ENCODE measurements at regions of chr6 and their contacts with region 1.

Region 1: DNA sequence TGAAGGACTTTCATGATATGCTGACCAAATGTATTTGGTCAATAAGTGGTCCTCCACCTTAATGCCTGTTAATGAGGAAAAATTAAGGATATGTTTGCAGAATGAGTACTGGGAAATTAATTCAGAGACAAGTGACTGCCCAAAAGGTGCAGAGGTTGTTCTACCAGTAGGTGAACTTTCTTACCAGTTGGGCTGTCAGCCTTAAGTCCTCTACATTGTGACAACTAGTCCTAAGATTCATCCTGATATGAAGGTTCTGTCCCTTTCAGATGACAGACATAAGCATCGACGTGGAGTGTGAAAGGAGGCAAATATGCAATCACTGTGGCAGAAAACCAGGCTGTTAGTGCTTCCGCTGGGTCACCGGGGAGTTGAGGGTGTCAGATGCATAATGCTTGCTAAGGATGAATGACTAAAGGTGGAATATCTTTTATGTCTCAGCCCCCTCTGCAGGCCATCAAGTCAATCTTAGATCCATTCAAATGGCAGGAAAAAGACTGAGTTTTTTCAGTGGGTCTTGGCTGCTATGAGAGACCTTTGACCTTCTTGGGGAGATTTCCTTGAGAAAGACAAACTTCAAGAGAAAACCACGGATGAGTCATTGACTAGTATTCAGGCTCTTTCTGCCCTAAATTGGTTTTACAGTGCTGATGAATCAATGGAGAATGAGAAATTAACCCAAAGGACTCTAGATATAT is 226.0 kb downstream of the TPBG start:
- DNase-seq: peak; percentile 60
- ATAC-seq: peak; percentile 96
- H3K4me3 ChIP-seq: no peak overlapping the region
- H3K27ac ChIP-seq: no peak overlapping the region
- H3K4me1 ChIP-seq: no peaks in the 10 kb centered on the region
- H3K27me3 ChIP-seq: no peaks in the 10 kb centered on the region
- CTCF ChIP-seq: peak; percentile 28 to 63 (median 33); a peak in 4 of 6 replicates
- EP300 ChIP-seq: no peak
- POLR2A ChIP-seq: no peak
- RAD21 ChIP-seq: peak; percentile 62

Region 2: GRCh38 chr6:82331031-82331773 is 258.5 kb before region 1 on chr6:
- CTCF ChIA-PET with region 1: no interaction called
- POLR2A ChIA-PET with region 1: no interaction called
- RAD21 ChIA-PET with region 1: no interaction called
- SMC1A ChIA-PET with region 1: no interaction called
- in situ Hi-C with region 1: no loop called
- intact Hi-C with region 1: loop called (anchors 1 kb)
- DNase-seq: no peak
- ATAC-seq: peak; percentile 46; the same call in 2 of the 3 replicates
- H3K4me3 ChIP-seq: no peak overlapping the region
- H3K27ac ChIP-seq: no peak overlapping the region
- H3K4me1 ChIP-seq: no peaks in the 10 kb centered on the region
- H3K27me3 ChIP-seq: no peaks in the 10 kb centered on the region
- CTCF ChIP-seq: peak in 2 of 3 experiments; percentile 30 to 44; a peak in 4 of 6 replicates
- EP300 ChIP-seq: no peak
- POLR2A ChIP-seq: no peak
- RAD21 ChIP-seq: peak; percentile 53

Region 3: DNA sequence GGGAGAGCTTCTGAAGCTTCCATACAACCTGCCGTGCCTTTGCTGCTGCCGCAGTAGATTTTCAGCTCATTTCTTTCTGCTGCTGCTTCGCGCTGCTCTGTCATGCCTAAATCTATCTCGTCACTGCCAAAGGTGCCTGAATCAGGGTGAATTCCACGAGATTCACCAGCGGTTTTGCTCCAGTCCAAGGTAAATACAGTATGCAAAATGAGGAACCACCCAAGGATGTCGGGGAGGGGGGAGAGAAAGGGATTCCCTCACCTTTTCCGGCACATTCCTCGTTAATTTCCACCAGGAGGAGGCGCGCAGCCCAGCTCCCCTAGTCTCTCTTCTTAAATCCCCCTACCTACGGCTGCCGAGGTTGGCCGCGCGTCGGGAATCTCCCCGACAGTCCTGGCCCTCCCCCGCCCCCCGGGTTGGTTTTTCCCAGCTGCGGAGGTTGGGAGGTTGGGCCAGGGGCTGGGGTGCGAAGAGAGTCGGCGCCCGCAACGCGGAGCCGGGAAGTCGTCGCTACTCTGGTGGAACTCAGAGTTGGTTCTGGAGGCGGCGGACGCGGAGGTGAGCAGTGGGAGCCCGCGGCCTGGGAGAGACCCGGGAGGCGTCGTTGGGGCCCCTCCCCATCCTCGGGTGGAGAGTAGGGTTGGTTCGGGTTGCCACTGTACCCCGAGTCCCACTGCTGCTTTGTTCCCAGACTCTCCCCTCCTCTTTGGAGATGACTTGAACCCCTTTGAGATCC is 226.1 kb before region 1 on chr6 and contains the start of gene TPBG:
- CTCF ChIA-PET with region 1: no interaction called
- POLR2A ChIA-PET with region 1: no interaction called
- RAD21 ChIA-PET with region 1: no interaction called
- SMC1A ChIA-PET with region 1: no interaction called
- in situ Hi-C with region 1: no loop called
- intact Hi-C with region 1: loop called (anchors 5 kb)
- DNase-seq: no peak
- ATAC-seq: peak; percentile 66
- H3K4me3 ChIP-seq: peak within 1 kb of the TSS; percentile 77
- H3K27ac ChIP-seq: no peak within 1 kb of the TSS; the same call in 1 of the 2 replicates
- H3K4me1 ChIP-seq: no peaks in the 10 kb centered on the region
- H3K27me3 ChIP-seq: peaks cover 3 to 5% of the 10 kb centered on the region in 2 experiments; a peak in 2 of 4 replicates
- CTCF ChIP-seq: peak in 2 of 3 experiments; percentile 15 to 38; a peak in 2 of 6 replicates
- EP300 ChIP-seq: no peak
- POLR2A ChIP-seq: peak; percentile 46
- RAD21 ChIP-seq: 0 out of 2 replicates have a peak, but pooled peaks have one; percentile 10
- polyA plus RNA-seq, gene TPBG: 0.06 to 0.33 TPM

Region 4: GRCh38 chr6:82607998-82608725 is 18.5 kb after region 1 on chr6:
- CTCF ChIA-PET with region 1: no interaction called
- POLR2A ChIA-PET with region 1: no interaction called
- RAD21 ChIA-PET with region 1: no interaction called
- SMC1A ChIA-PET with region 1: no interaction called
- in situ Hi-C with region 1: no loop called
- intact Hi-C with region 1: no loop called
- DNase-seq: no peak
- ATAC-seq: no peak
- H3K4me3 ChIP-seq: no peak overlapping the region
- H3K27ac ChIP-seq: no peak overlapping the region
- H3K4me1 ChIP-seq: no peaks in the 10 kb centered on the region
- H3K27me3 ChIP-seq: no peaks in the 10 kb centered on the region
- CTCF ChIP-seq: no peak
- EP300 ChIP-seq: no peak
- POLR2A ChIP-seq: no peak
- RAD21 ChIP-seq: no peak

Measured in GM12878 (cell line).